CD8-positive, alpha-beta memory T cell (primary cell): ENCODE measurements at regions of chr20 and their contacts with region 1.

Region 1: DNA sequence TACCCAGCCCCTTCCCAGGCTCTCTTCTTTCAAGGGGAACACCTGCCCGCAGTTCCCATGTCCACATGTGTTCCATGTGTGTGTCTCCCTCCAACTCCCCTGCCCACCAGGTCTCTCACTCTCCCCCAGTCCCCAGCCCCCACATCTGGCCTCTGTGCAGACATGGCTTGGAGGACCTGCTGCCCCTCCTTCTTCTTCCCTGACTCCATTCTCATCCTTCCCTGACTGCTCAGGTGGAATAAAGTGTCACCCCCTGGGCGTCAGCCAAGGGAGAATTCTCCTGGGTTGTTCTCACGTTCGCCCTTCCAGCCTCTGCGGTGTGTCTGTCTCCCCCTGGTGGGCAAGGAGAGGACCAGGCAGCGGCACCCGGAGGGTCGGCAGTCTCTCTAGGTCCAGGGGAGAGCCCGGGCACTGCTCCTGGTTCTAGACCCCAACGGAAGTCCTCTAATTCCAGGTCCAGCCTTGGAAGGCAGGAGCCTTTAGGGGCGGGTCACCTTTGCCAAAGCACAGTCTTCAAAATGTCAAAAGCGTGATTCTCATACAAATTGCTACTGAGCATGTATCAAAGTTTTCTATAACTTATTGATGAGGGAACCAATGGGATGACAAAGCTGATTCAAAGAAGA is 50.5 kb downstream of the EBF4 start:
- DNase-seq: peak; percentile 56 to 81 (median 68)
- H3K4me3 ChIP-seq: no peak overlapping the region
- H3K4me3 Mint-ChIP-seq: peak overlapping the region; percentile 1 to 88 (median 77)
- H3K27ac ChIP-seq: no peak overlapping the region
- H3K27ac Mint-ChIP-seq: peak overlapping the region; percentile 78 to 99 (median 94)
- H3K4me1 ChIP-seq: peaks cover 48% of the 10 kb centered on the region
- H3K4me1 Mint-ChIP-seq: peaks cover 45 to 51% (median 51%) of the 10 kb centered on the region in 3 donors
- H3K27me3 ChIP-seq: no peaks in the 10 kb centered on the region
- H3K27me3 Mint-ChIP-seq: peaks cover 0 to under 1% of the 10 kb centered on the region in 2 donors

Region 2: GRCh38 chr20:2688041-2688591 is 54.9 kb before region 1 on chr20:
- CTCF ChIA-PET with region 1: interaction called, 29 read pairs
- POLR2A ChIA-PET with region 1: interaction called, 6 read pairs
- DNase-seq: peak; percentile 65 to 84 (median 75)
- H3K4me3 ChIP-seq: no peak overlapping the region
- H3K4me3 Mint-ChIP-seq: peak overlapping the region; percentile 23 to 87 (median 60)
- H3K27ac ChIP-seq: no peak overlapping the region
- H3K27ac Mint-ChIP-seq: peak overlapping the region; percentile 9 to 91 (median 60)
- H3K4me1 ChIP-seq: peaks cover 18% of the 10 kb centered on the region
- H3K4me1 Mint-ChIP-seq: peaks cover 27 to 30% (median 29%) of the 10 kb centered on the region in 3 donors
- H3K27me3 ChIP-seq: no peaks in the 10 kb centered on the region
- H3K27me3 Mint-ChIP-seq: peaks cover 9 to 27% of the 10 kb centered on the region in 2 donors

Region 3: DNA sequence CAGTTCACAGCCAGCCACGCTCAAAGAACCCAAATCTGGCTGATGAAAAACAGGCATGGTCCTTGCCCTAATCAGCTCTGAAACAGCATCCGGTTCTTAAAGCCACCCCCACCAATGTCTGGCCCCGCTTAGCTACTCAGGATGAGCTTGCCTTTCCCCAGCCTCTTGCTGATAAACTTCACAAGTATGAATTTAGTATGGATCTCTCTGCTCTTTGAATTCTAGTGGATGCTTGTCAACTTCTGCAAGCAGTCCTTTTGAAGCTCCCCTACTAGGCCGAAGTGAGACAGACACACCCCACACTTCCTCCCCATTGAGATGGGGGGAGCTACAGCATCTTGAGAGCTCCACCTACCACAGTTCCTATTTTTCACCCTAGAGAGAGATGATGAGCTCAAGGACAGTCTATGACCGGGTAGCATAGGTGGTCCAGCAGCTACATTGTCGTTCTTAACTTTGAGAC is 13.8 kb before region 1 on chr20:
- CTCF ChIA-PET with region 1: interaction called, 41 read pairs
- POLR2A ChIA-PET with region 1: interaction called, 35 read pairs
- DNase-seq: peak in 3 of 5 donors; percentile 54 to 71 (median 64)
- H3K4me3 ChIP-seq: peak overlapping the region; percentile 4
- H3K4me3 Mint-ChIP-seq: peak overlapping the region in 6 of 7 donors; percentile 51 to 71 (median 65)
- H3K27ac ChIP-seq: no peak overlapping the region
- H3K27ac Mint-ChIP-seq: peak overlapping the region; percentile 16 to 96 (median 90)
- H3K4me1 ChIP-seq: peaks cover 28% of the 10 kb centered on the region
- H3K4me1 Mint-ChIP-seq: peaks cover 21 to 28% (median 28%) of the 10 kb centered on the region in 3 donors
- H3K27me3 ChIP-seq: no peaks in the 10 kb centered on the region
- H3K27me3 Mint-ChIP-seq: peaks cover 3 to 13% of the 10 kb centered on the region in 2 donors

Region 4: DNA sequence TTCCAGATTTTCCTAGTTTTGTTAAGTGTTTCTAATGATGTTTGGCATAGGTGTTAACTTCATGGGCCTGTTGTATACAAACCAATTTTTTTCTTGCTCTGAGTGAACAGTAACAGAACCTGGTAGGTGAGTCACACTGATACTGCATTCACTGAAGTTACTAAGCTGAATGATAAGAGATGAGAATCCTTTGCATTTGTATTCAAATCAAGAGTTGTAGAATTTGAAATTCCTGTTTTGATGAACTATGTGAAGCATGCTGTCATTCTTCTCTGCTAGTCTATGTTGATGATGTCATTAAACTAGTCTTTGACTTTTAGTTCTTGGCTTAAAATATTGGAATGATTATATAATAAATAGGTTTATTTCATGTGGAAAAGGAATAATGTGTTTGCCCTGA is 168.2 kb after region 1 on chr20:
- CTCF ChIA-PET with region 1: no interaction called
- POLR2A ChIA-PET with region 1: no interaction called
- DNase-seq: no peak
- H3K4me3 ChIP-seq: no peak overlapping the region
- H3K4me3 Mint-ChIP-seq: no peak overlapping the region
- H3K27ac ChIP-seq: no peak overlapping the region
- H3K27ac Mint-ChIP-seq: no peak overlapping the region
- H3K4me1 ChIP-seq: no peaks in the 10 kb centered on the region
- H3K4me1 Mint-ChIP-seq: peaks cover 17 to 40% (median 22%) of the 10 kb centered on the region in 3 donors
- H3K27me3 ChIP-seq: no peaks in the 10 kb centered on the region
- H3K27me3 Mint-ChIP-seq: no peaks in the 10 kb centered on the region

Region 5: GRCh38 chr20:3080939-3081388 is 337.9 kb after region 1 on chr20:
- CTCF ChIA-PET with region 1: no interaction called
- POLR2A ChIA-PET with region 1: no interaction called
- DNase-seq: no peak
- H3K4me3 ChIP-seq: no peak overlapping the region
- H3K4me3 Mint-ChIP-seq: peak overlapping the region in 1 of 7 donors; percentile 11
- H3K27ac ChIP-seq: no peak overlapping the region
- H3K27ac Mint-ChIP-seq: no peak overlapping the region
- H3K4me1 ChIP-seq: peaks cover 10% of the 10 kb centered on the region
- H3K4me1 Mint-ChIP-seq: peaks cover 3 to 28% (median 5%) of the 10 kb centered on the region in 3 donors
- H3K27me3 ChIP-seq: peaks cover 22% of the 10 kb centered on the region
- H3K27me3 Mint-ChIP-seq: peaks cover 38 to 59% of the 10 kb centered on the region in 2 donors